ENCODE measurements at regions of chr1 and their contacts with region 1.

Region 1: DNA sequence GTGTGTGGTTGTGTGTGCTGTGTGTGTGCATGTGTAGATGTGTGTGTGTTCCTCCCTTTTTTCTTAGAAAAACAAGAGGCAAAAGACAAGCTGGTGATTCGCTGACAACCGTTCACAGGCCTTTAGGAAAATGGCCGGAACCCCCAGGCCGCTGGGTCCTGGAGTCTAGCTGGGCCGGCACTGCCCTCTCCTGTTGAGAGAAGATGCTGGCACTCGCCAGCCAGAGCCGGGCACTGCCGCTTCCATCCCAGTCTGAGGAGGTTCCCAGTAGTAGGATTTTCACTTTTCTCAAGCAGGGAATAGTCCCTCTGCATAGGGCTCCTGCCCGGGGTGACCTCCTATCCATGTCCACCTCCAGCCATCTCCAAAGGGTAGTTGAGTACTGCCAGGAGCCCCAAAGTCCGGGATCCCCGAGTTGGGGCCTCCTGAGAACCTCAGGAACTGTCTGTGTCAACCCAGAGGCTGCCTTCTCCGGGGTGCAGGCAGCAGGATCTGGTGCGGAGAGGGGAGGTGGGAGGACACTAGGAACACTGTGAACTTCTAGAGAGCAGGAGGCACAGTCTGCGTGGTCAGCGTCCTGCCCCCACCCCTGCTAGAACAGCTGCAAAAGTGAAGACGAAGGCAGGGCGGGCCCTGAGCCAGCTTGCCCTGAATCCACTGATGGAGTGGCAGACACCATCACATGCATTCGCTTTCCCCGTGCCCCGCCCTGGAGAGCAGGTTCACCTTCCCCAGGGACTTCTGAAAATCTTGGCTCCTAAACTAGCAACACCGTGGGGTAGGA is 44.1 kb upstream of the ARHGEF16 start:
- DNase-seq: peak; percentile 91
- H3K4me3 ChIP-seq: no peak overlapping the region
- H3K27ac ChIP-seq: no peak overlapping the region
- H3K4me1 ChIP-seq: no peaks in the 10 kb centered on the region
- H3K27me3 ChIP-seq: peaks cover 13% of the 10 kb centered on the region

Region 2: GRCh38 chr1:3012456-3013291 is 397.7 kb before region 1 on chr1:
- in situ Hi-C with region 1: loop called (anchors 10 kb)
- DNase-seq: peak; percentile 43
- H3K4me3 ChIP-seq: no peak overlapping the region
- H3K27ac ChIP-seq: no peak overlapping the region
- H3K4me1 ChIP-seq: no peaks in the 10 kb centered on the region
- H3K27me3 ChIP-seq: peaks cover 13% of the 10 kb centered on the region